Endothelial cell of umbilical vein (primary cell): ENCODE measurements at regions of chr19 and their contacts with region 1.

Region 1: DNA sequence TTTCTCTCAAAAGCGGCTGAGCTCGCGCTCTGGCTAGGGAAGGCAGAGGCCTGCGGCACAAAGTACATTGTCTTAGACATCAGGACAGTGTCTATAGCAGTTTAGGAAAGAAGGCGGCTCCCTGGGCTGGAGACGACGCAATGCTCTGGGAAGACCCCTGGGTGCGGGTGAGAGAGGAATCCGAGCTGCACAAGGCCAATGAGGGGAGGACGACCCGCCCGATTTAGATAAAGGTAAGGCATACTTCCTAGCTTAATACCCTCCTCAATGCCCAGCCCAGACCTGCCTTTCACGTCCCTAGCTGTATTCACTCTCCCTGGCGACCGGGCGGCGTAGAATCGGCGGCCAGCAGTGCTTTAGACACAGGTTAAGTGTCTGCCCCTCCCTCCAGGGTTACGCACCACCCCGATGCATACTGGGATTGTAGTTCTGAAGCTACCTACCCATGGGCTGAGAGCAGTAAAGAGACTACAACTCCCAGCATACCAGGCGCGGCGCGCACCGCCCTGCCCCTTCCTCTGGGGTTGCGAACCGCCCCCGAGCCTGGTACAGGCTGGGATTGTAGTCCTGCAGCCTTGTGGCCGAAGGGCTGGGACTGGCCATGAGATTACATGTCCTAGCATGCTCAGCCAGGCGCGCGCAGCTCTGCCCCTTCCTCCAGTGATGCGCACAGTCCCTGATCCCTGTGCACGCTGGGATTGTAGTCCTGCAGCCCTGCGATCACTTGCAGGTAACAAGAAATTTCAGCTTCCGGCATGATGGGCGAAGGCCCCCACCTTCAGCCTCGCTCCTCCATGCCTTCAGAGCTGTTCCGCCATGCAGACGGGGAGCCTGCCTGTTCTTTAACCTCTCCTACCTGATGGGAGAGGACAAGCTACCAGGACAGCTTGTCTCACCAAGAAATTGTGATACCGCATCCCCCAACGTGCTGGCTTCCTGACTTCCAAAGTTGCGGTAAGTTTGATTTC is 43.4 kb upstream of the ZNF14 start:
- DNase-seq: peak; percentile 99
- H3K4me3 ChIP-seq: peak overlapping the region; percentile 23 to 76 (median 70)
- H3K27ac ChIP-seq: no peak overlapping the region
- H3K4me1 ChIP-seq: peaks cover 10% of the 10 kb centered on the region
- H3K27me3 ChIP-seq: no peaks in the 10 kb centered on the region
- CTCF ChIP-seq: peak in 1 of 2 donors; percentile 15
- POLR2A ChIP-seq: peak; percentile 67

Region 2: DNA sequence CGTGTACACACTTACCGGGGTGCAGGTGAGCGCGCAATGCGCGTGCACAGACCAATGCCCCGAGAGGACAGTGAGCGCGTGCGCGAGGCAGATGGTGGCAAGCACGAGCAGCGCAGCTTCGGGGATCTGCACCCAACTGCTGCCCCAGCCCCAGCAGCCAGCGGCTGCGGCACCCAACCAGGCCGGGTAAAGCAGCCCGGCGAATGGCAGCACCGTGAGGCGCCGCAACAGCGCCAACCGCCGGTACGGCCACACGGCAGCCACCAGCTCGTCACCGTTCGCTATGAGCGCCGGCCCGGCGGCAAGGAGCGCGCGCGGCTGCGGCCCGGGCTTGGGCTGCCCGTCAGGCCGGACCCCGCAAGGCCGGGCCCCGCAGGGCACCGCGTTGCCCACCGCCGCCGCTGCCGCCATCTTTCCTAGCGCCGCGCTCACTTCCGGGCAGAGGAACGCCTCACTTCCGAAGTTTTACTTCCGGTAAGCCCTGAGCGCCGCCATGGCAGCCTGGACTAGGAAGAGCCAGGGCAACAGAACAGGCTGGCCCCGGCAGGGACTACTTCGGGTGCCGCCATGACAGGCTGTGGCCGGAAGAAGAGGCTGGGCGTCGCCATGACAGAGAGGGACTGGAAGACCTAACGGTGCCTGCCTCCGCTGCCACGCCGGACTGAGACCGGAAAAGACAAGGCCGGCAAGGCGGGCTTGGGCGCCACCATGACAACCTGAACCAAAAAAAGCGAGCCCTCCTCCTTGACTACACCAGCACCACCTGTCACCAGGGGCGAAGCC is 112.9 kb before region 1 on chr19 and contains the start of gene ATP13A1:
- CTCF ChIA-PET with region 1: no interaction called
- POLR2A ChIA-PET with region 1: no interaction called
- dilution Hi-C with region 1: no loop called
- intact Hi-C with region 1: loop called (anchors 1 kb)
- DNase-seq: peak; percentile 96
- H3K4me3 ChIP-seq: peak within 1 kb of the TSS; percentile 3 to 57 (median 56)
- H3K27ac ChIP-seq: peak within 1 kb of the TSS; percentile 77
- H3K4me1 ChIP-seq: peaks cover 9% of the 10 kb centered on the region
- H3K27me3 ChIP-seq: no peaks in the 10 kb centered on the region
- CTCF ChIP-seq: peak in 1 of 2 donors; percentile 34
- POLR2A ChIP-seq: peak; percentile 75
- total RNA-seq, gene ATP13A1: 48.7 and 56.8 TPM in 2 replicates

Region 3: GRCh38 chr19:19732579-19733501 is 43.5 kb before region 1 on chr19 and contains the start of gene ZNF14:
- CTCF ChIA-PET with region 1: interaction called, 3 read pairs
- POLR2A ChIA-PET with region 1: interaction called, 4 read pairs
- dilution Hi-C with region 1: no loop called
- intact Hi-C with region 1: loop called (anchors 1 kb)
- DNase-seq: peak; percentile 95
- H3K4me3 ChIP-seq: peak within 1 kb of the TSS; percentile 37 to 79 (median 78)
- H3K27ac ChIP-seq: peak within 1 kb of the TSS; percentile 1
- H3K4me1 ChIP-seq: peaks cover 5% of the 10 kb centered on the region
- H3K27me3 ChIP-seq: no peaks in the 10 kb centered on the region
- CTCF ChIP-seq: peak in 1 of 2 donors; percentile 27
- POLR2A ChIP-seq: peak; percentile 89
- total RNA-seq, gene ZNF14: 2.1 and 2.6 TPM in 2 replicates

Region 4: GRCh38 chr19:19865739-19866481 is 89.6 kb after region 1 on chr19 and contains the start of gene ZNF253:
- CTCF ChIA-PET with region 1: no interaction called
- POLR2A ChIA-PET with region 1: interaction called, 3 read pairs
- dilution Hi-C with region 1: no loop called
- intact Hi-C with region 1: loop called (anchors 5 kb)
- DNase-seq: peak; percentile 89
- H3K4me3 ChIP-seq: peak within 1 kb of the TSS; percentile 82 to 93 (median 91)
- H3K27ac ChIP-seq: peak within 1 kb of the TSS; percentile 60
- H3K4me1 ChIP-seq: no peaks in the 10 kb centered on the region
- H3K27me3 ChIP-seq: no peaks in the 10 kb centered on the region
- CTCF ChIP-seq: no peak
- POLR2A ChIP-seq: no peak
- total RNA-seq, gene ZNF253: 3.9 and 8.4 TPM in 2 replicates

Region 5: DNA sequence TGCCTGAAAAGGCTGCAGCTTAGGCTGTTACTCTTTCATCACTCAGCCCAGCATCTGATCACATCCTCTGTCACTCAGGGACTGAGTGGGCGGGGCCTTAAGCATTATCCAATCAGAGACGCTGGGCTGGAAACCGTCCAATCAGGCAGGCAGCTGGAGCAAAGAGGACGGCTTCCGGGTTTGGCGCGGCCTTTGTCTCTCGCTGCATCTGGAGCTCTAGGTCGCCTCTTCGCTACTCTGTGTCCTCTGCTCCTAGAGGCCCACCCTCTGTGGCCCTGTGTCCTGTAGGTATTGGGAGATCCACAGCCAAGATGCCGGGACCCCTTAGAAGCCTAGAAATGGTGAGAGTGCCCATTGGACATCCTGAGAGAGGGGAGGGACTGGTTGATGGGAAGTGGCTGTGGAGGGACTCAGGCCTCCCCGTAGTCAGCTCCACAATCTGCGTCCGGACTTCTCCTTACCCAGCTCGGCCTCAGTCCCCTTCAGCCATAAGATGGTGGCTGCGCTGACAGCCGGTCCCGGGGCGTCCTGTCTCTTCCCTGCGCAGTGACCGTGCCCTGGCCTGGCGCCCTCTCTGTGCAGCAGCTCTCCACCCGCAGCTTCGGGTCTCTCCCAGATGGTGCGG is 390.8 kb after region 1 on chr19 and contains the start of gene ZNF486:
- CTCF ChIA-PET with region 1: no interaction called
- POLR2A ChIA-PET with region 1: no interaction called
- dilution Hi-C with region 1: no loop called
- intact Hi-C with region 1: loop called (anchors 5 kb)
- DNase-seq: peak; percentile 95
- H3K4me3 ChIP-seq: peak within 1 kb of the TSS; percentile 76 to 86 (median 77)
- H3K27ac ChIP-seq: peak within 1 kb of the TSS; percentile 94
- H3K4me1 ChIP-seq: no peaks in the 10 kb centered on the region
- H3K27me3 ChIP-seq: no peaks in the 10 kb centered on the region
- CTCF ChIP-seq: no peak
- POLR2A ChIP-seq: peak; percentile 31
- total RNA-seq, gene ZNF486: 5.4 and 8.4 TPM in 2 replicates